ENCODE measurements at regions of chr17 and their contacts with region 1.

Region 1: DNA sequence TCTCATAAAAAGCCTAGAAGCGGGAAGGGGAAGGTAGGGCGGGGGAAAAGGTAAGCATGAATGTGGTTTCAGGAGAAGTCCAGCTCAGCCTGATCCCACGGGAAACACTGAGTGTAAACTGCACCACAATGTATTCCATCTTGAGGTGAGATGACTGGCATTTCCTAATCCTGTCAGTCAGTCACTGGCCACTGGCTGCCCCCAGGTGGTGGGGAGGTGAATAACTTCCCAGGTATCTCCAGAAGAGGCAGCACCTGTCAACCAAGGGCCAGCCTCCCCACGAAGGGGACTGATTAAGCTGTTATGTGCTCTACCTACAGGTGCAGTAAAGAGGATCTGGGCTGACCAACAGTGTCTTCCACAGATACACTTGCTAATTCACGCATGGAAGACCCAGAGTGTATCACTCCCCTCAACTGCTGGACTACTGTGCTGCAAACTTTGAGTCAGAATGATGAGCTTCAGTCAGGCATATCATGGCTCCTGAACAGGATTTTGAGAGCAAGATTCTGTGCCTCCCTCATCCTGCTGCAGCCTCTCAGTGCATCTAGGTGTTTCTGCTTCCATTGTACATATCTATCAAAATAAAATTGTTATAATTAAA is 108.5 kb upstream of the CCL2 start:
- DNase-seq: peak; percentile 53
- ATAC-seq: peak; percentile 75

Region 2: GRCh38 chr17:34012709-34013375 is 133.7 kb before region 1 on chr17:
- intact Hi-C with region 1: no loop called
- DNase-seq: no peak
- ATAC-seq: no peak

Region 3: GRCh38 chr17:34081269-34081668 is 65.3 kb before region 1 on chr17:
- intact Hi-C with region 1: loop called (anchors 5 kb)
- DNase-seq: no peak
- ATAC-seq: no peak

Measured in Right ventricle myocardium superior (tissue), 1 donor.